Activated T-helper 2 cell treated with anti-CD3 and anti-CD28 coated beads, Interferon-gamma antibody, Interleukin-2, Interleukin-4, amounts not matched to agents 10 μg/mL and 5 μg/mL and 100 μg/mL, durations not matched to agents 14 hours and 24 hours and 36 hours (primary cell): ENCODE measurements at regions of chr22 and their contacts with region 1.

Region 1: GRCh38 chr22:37121887-37122591 is 12.5 kb upstream of the TMPRSS6 start:
- DNase-seq: peak; percentile 92
- H3K4me3 Mint-ChIP-seq: peak overlapping the region; percentile 76
- H3K27ac Mint-ChIP-seq: peak overlapping the region; percentile 100
- H3K4me1 Mint-ChIP-seq: peaks cover 73% of the 10 kb centered on the region
- H3K27me3 Mint-ChIP-seq: no peaks in the 10 kb centered on the region

Region 2: GRCh38 chr22:37095113-37095512 is 26.9 kb before region 1 on chr22:
- intact Hi-C with region 1: loop called (anchors 1 kb)
- DNase-seq: no peak
- H3K4me3 Mint-ChIP-seq: no peak overlapping the region
- H3K27ac Mint-ChIP-seq: peak overlapping the region; percentile 72
- H3K4me1 Mint-ChIP-seq: peaks cover 25% of the 10 kb centered on the region
- H3K27me3 Mint-ChIP-seq: no peaks in the 10 kb centered on the region

Region 3: DNA sequence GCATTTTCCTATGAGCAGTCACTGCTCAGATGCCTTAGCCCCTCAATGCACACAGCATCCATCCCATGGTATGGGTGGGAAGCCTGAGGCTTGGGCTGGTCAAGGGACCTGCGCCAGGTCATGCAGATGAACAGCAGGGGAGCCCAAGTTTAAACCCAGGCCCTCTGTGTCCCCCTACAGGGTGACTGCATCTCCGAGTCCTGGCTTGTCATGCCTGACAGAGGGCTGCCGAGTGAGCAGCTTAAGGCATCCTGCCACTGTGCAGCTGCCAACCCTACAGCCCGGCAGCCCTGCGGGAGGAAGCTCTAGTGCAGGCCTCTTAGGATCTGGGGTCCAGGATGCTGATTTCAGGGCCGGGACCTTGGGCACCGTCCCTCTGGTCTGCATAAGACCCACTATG is 17.7 kb after region 1 on chr22:
- intact Hi-C with region 1: loop called (anchors 2 kb)
- DNase-seq: no peak
- H3K4me3 Mint-ChIP-seq: no peak overlapping the region
- H3K27ac Mint-ChIP-seq: peak overlapping the region; percentile 97
- H3K4me1 Mint-ChIP-seq: peaks cover 49% of the 10 kb centered on the region
- H3K27me3 Mint-ChIP-seq: no peaks in the 10 kb centered on the region

Region 4: GRCh38 chr22:37148742-37149665 is 27.0 kb after region 1 on chr22:
- intact Hi-C with region 1: loop called (anchors 1 kb)
- DNase-seq: no peak
- H3K4me3 Mint-ChIP-seq: peak overlapping the region; percentile 92
- H3K27ac Mint-ChIP-seq: peak overlapping the region; percentile 94
- H3K4me1 Mint-ChIP-seq: peaks cover 46% of the 10 kb centered on the region
- H3K27me3 Mint-ChIP-seq: no peaks in the 10 kb centered on the region

Region 5: DNA sequence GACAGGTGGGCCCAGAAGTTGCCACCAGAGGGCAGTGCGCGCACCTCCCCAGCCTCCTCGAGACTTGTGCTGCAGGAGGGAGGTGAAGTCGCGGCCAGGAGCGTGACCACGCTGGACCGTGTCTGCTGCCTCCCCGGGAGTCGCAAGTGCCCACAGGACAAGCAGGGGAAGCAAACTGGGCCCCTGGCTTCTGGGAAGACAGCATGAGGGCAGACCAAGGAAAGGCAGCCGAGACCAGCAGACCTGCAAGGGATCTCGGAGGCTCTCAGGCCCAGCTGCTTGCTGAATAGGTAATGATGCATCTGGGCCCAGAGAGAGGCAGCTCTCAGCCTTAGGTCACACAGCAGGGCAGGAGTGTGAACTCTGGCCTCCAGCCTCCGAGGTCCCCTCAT is 44.6 kb after region 1 on chr22:
- intact Hi-C with region 1: loop called (anchors 1 kb)
- DNase-seq: peak; percentile 75
- H3K4me3 Mint-ChIP-seq: peak overlapping the region; percentile 68
- H3K27ac Mint-ChIP-seq: peak overlapping the region; percentile 79
- H3K4me1 Mint-ChIP-seq: peaks cover 64% of the 10 kb centered on the region
- H3K27me3 Mint-ChIP-seq: no peaks in the 10 kb centered on the region